ENCODE measurements at regions of chr2 and their contacts with region 1.

Region 1: DNA sequence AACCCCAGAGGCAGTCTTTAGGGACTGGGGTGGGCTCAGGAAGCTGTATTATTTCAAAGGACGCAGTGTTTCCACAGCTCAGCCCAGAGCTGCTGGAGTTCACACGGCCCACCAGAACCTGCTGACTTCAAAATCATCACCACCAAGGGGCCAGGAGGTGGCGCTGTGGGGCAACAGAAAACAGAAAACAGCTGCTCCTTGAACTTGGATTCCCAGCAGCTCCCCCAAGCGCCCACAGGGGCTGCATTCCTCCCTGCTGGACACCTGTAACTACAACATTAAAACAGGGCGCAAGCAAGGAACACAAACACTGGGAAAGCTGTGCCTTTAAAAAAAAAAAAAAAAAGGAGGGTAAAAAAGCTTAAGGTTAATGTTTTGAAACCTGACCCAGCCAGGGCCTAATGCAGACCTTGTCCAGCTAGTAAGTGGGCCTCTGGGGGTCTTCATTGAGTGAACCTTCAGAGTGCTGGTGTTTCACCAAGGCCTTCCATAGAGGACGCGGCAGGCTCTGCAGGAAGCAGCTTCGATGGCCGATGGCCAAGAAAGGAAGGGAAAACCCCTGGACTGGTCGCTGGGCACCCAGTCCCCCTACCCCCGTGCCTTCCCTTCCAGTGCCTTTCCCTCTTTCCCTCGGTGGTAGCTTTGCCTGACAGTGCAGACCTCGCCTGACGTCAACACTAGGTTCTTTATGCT is 25.9 kb downstream of the MLPH start:
- DNase-seq: no peak
- H3K4me3 ChIP-seq: no peak overlapping the region
- CTCF ChIP-seq: peak; percentile 87

Region 2: DNA sequence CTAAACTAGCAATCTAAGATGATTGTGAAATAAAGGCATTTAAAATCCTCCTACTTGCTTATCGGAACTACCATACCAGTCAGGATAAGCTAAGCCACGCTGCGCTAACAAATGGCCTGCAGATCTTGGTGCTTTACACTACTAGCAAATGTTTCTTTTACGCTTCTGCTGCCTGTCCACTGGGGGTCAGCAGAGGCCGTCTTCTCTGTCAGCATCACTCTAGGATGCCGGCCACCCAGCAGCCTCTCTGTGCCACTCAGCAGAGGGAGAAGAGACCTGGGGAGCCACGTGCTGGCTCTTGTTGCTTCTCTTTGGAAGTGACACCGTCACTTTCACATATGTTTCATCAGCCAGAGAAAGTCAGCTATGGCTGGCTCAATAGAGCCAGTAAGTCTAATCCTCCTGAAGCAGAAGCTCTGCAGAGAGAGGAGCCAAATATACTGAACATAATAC is 390.7 kb before region 1 on chr2:
- CTCF ChIA-PET with region 1: interaction called, 35 read pairs
- POLR2A ChIA-PET with region 1: no interaction called
- DNase-seq: no peak
- H3K4me3 ChIP-seq: no peak overlapping the region
- CTCF ChIP-seq: peak; percentile 63

Region 3: GRCh38 chr2:237421542-237422116 is 91.3 kb before region 1 on chr2:
- CTCF ChIA-PET with region 1: interaction called, 31 read pairs
- POLR2A ChIA-PET with region 1: no interaction called
- DNase-seq: no peak
- H3K4me3 ChIP-seq: no peak overlapping the region
- CTCF ChIP-seq: peak; percentile 91

Region 4: DNA sequence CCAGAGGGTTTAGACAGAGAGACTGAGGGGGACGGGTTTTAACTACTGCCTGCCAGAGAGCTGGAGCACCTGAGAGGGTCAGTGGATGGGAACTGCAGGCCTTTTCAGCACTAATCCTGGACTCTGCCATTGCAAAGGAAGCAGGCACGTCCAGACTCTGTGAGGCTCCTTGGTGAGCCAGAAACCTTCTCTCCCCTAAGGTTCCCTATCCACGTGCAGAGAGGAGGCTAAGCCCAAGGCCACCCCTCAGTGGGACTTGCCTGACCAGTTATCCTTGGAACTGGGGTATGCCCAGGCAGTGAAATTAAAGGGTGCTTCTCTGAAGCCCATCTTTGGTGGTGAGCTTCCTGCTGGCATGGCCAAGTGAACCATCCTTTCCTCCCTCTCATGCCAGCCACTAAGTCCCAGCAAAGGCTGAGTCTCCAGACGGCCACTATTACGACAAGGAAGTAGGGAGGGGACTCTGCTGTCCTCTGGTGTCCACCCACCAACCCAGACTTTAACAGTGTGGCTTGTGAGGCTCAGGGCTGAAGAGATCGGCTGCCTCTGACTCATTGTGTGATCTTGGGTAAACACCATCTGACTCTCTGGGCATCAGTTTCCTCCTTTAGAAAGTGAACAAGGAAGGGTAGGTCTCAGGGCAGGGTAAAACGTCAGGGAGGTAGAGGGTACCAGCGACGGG is 29.7 kb before region 1 on chr2:
- CTCF ChIA-PET with region 1: interaction called, 23 read pairs
- POLR2A ChIA-PET with region 1: interaction called, 3 read pairs
- DNase-seq: peak; percentile 57
- H3K4me3 ChIP-seq: no peak overlapping the region
- CTCF ChIP-seq: peak; percentile 59

Region 5: GRCh38 chr2:237524631-237525030 is 11.7 kb after region 1 on chr2:
- CTCF ChIA-PET with region 1: interaction called, 172 read pairs
- POLR2A ChIA-PET with region 1: no interaction called
- DNase-seq: no peak
- H3K4me3 ChIP-seq: no peak overlapping the region
- CTCF ChIP-seq: no peak

Region 6: GRCh38 chr2:237558906-237559641 is 46.2 kb after region 1 on chr2:
- CTCF ChIA-PET with region 1: interaction called, 20 read pairs
- POLR2A ChIA-PET with region 1: no interaction called
- DNase-seq: no peak
- H3K4me3 ChIP-seq: no peak overlapping the region
- CTCF ChIP-seq: no peak

Region 7: GRCh38 chr2:237774802-237775553 is 262.1 kb after region 1 on chr2:
- CTCF ChIA-PET with region 1: interaction called, 14 read pairs
- POLR2A ChIA-PET with region 1: no interaction called
- DNase-seq: no peak
- H3K4me3 ChIP-seq: no peak overlapping the region
- CTCF ChIP-seq: peak; percentile 58